GM10248 (cell line): ENCODE measurements at regions of chr12 and their contacts with region 1.

Region 1: GRCh38 chr12:3564411-3564810 is 73.4 kb downstream of the PRMT8 start:
- DNase-seq: no peak
- CTCF ChIP-seq: no peak

Region 2: DNA sequence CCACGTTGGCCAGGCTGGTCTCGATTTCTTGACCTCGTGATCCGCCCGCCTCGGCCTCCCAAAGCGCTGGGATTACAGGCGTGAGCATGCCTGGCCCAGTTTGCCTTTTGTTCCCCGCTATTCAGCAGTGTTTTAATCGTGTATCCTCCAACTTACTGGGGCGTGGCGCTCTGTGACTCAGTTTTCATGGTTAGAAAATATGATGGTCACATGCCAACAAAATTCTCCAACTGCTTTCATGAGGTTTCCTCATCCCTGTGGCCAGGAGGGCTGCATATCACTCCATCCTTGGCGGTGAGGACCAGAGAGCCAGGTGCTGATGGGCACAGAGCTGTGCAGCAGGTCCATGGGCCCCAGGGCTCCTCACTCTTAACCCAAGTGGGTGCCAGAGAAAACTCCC is 106.4 kb before region 1 on chr12:
- CTCF ChIA-PET with region 1: no interaction called
- POLR2A ChIA-PET with region 1: interaction called, 10 read pairs
- DNase-seq: no peak
- CTCF ChIP-seq: no peak

Region 3: DNA sequence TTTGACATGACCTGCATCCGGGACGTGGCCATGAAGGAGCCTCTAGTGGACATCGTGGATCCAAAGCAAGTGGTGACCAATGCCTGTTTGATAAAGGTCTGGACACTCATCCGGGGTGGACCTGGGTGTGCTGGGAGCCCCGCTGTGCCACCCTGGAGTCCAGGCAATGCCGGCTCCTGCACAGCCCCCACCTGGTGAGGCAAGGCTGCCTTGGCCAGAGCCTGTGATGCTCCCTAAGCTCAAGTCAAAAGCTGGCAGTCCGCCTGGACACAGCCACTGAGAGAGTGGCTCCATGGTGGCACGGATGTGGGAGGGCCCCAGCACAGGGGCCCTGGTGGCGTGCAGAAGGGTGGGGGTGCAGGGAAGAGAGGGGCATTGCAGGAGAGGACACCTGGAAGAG is 12.5 kb after region 1 on chr12:
- CTCF ChIA-PET with region 1: no interaction called
- POLR2A ChIA-PET with region 1: no interaction called
- DNase-seq: no peak
- CTCF ChIP-seq: no peak

Region 4: GRCh38 chr12:3587402-3588013 is 23.1 kb after region 1 on chr12:
- CTCF ChIA-PET with region 1: no interaction called
- POLR2A ChIA-PET with region 1: no interaction called
- DNase-seq: no peak
- CTCF ChIP-seq: no peak